Naive thymus-derived CD4-positive, alpha-beta T cell (primary cell): ENCODE measurements at regions of chr14 and their contacts with region 1.

Region 1: GRCh38 chr14:35404449-35405303 is at the start of gene NFKBIA:
- DNase-seq: peak; percentile 91 to 99 (median 93)
- ATAC-seq: peak; percentile 79
- H3K4me3 ChIP-seq: peak within 1 kb of the TSS; percentile 85
- H3K4me3 Mint-ChIP-seq: peak within 1 kb of the TSS; percentile 92 to 97 (median 94)
- H3K27ac ChIP-seq: peak within 1 kb of the TSS; percentile 96
- H3K27ac Mint-ChIP-seq: peak within 1 kb of the TSS; percentile 96 to 99 (median 98)
- H3K4me1 ChIP-seq: peaks cover 42 to 43% of the 10 kb centered on the region in 2 donors
- H3K4me1 Mint-ChIP-seq: peaks cover 28 to 63% (median 53%) of the 10 kb centered on the region in 7 donors
- H3K27me3 ChIP-seq: no peaks in the 10 kb centered on the region
- H3K27me3 Mint-ChIP-seq: peaks cover 0 to 2% (median 0%) of the 10 kb centered on the region in 5 donors
- total RNA-seq, gene NFKBIA: 144 to 1,533 (median 246) TPM

Region 2: DNA sequence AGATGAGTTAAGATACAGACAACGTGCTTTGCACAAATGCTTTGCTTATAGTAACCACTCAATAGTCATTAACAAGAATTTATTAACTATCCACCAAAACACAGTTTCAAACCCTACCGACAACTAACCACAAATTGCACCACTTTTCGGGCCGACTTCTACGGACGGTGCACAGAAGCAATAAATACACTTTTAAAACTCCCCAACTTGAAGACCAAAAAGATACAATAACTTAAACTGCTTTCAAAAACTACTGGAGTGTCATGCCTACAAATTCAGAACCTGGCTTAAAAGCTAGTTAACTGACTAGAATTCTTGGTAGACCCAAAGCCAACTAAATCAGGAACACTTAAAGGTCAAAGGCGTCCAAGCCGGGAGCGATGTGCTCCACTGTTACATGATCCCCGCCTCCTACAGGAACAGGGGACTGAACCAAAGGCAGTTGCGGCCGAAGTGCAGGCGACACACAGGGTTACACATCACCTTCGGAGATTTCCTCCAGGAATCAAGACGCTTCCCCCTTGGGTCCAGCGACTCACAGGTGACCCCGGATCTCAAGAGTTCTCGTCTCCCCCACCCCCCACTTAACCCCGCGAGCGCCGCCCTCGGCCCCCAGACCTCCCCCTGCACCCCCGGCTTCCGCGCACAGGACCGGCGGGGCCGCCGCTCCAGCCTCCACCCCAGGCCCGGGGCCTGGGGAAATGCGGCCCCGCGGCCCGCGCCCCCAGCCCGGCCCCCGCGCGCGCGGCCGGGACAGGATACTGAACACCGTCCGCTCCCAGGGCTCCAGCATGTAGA is 943.1 kb before region 1 on chr14:
- CTCF ChIA-PET with region 1: no interaction called
- POLR2A ChIA-PET with region 1: no interaction called
- intact Hi-C with region 1: loop called in 1 of 2 experiments (anchors 5 kb)
- DNase-seq: peak in 7 of 9 donors; percentile 2 to 22 (median 16)
- ATAC-seq: peak; percentile 4
- H3K4me3 ChIP-seq: peak overlapping the region; percentile 70
- H3K4me3 Mint-ChIP-seq: peak overlapping the region; percentile 83 to 97 (median 89)
- H3K27ac ChIP-seq: peak overlapping the region; percentile 78
- H3K27ac Mint-ChIP-seq: peak overlapping the region; percentile 60 to 94 (median 86)
- H3K4me1 ChIP-seq: peaks cover 0 to 6% of the 10 kb centered on the region in 2 donors
- H3K4me1 Mint-ChIP-seq: peaks cover 11 to 25% (median 15%) of the 10 kb centered on the region in 7 donors
- H3K27me3 ChIP-seq: no peaks in the 10 kb centered on the region
- H3K27me3 Mint-ChIP-seq: no peaks in the 10 kb centered on the region

Region 3: GRCh38 chr14:34875031-34875922 is 529.4 kb before region 1 on chr14 and contains the start of gene BAZ1A:
- CTCF ChIA-PET with region 1: no interaction called
- POLR2A ChIA-PET with region 1: interaction called, 9 read pairs
- intact Hi-C with region 1: loop called (anchors 1 kb)
- DNase-seq: peak; percentile 26 to 61 (median 55)
- ATAC-seq: peak; percentile 14
- H3K4me3 ChIP-seq: peak within 1 kb of the TSS; percentile 85
- H3K4me3 Mint-ChIP-seq: peak within 1 kb of the TSS; percentile 91 to 100 (median 99)
- H3K27ac ChIP-seq: peak within 1 kb of the TSS; percentile 96
- H3K27ac Mint-ChIP-seq: peak within 1 kb of the TSS; percentile 94 to 100 (median 99)
- H3K4me1 ChIP-seq: peaks cover 10 to 19% of the 10 kb centered on the region in 2 donors
- H3K4me1 Mint-ChIP-seq: peaks cover 18 to 40% (median 34%) of the 10 kb centered on the region in 7 donors
- H3K27me3 ChIP-seq: no peaks in the 10 kb centered on the region
- H3K27me3 Mint-ChIP-seq: no peaks in the 10 kb centered on the region
- total RNA-seq, gene BAZ1A: 47.4 to 62.5 (median 53.3) TPM

Region 4: DNA sequence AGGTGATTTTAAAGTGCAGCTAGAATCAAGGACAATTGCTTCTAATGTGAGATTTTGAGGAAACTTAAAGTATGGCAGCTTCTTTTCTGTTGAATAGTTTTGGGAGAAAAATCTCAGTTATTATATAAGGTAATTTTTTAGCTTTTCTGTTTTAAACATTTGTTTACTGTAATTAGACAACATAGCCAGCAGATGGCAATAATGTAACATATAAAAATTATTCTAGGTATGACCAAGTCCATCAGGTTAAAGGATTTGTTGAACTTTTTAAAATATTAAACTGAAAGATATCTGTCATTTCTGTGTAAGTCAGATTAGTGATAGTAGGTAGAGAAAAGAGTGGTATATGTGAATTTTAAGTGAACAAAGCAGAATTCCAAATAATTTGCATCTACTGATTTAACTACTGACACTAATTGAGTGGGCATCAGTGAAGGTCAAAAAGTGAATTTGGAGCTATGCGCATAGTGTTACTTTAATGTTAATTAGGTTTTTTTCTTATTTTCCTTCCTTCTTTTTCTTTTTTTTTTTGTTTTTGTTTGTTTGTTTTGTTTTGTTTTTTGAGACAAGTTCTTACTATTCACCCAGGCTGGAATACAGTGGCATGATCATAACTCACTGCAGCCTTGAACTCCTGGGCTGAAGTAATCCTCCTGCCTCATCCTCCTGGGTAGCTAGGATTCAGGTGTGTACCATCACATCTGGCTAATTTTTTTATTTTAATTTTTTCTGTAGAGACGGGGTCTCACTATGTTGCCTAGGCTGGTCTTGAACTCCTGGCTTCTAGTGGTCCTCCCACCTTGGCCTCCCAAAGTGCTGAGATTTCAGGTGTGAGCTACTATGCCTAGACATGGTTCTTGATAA is 263.7 kb before region 1 on chr14:
- CTCF ChIA-PET with region 1: interaction called, 9 read pairs
- POLR2A ChIA-PET with region 1: interaction called, 4 read pairs
- intact Hi-C with region 1: loop called (anchors 1 kb)
- DNase-seq: peak in 4 of 9 donors; percentile 24 to 57 (median 40)
- ATAC-seq: peak; percentile 69
- H3K4me3 ChIP-seq: no peak overlapping the region
- H3K4me3 Mint-ChIP-seq: no peak overlapping the region
- H3K27ac ChIP-seq: peak overlapping the region; percentile 40
- H3K27ac Mint-ChIP-seq: peak overlapping the region in 6 of 9 donors; percentile 65 to 91 (median 75)
- H3K4me1 ChIP-seq: no peaks in the 10 kb centered on the region
- H3K4me1 Mint-ChIP-seq: peaks cover 2 to 26% (median 17%) of the 10 kb centered on the region in 7 donors
- H3K27me3 ChIP-seq: no peaks in the 10 kb centered on the region
- H3K27me3 Mint-ChIP-seq: no peaks in the 10 kb centered on the region

Region 5: DNA sequence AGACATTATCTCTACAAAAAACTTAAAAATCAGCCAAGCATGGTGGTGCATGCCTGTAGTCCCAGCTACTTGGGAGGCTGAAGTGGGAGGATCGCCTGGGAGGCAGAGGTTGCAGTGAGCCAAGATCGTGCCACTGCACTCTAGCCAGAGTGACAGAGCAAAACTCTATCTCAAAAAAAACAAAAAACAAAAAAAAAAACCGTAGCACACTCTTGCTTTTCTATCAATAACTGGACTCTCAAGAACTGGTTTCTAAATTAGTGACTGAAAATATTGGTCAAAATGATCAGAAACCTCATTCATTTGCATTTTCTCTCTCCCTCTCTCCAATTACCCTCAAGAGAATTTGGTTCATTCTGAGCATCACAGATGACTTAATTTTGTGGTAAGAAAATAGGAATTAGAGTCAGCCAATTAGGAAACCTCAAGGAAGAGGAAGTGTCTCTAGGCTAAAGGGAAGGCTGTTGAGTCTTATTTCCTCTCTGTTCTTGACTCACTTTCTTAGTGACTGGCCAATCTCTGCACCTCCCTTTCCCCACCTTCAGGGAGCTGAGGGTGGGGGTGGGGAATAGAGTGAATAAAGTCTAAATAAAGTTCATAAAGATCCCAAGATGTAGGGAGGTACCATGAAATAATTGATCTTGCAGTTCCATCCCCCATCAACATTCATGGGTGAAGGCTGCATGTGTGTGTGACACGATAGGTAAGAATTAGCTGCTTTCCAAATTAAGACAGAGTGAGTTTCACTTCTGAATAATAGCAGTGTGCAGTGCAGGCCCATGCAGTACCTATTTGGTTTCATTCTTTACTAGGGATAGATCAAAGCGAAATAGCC is 119.3 kb before region 1 on chr14:
- CTCF ChIA-PET with region 1: interaction called, 6 read pairs
- POLR2A ChIA-PET with region 1: interaction called, 110 read pairs
- intact Hi-C with region 1: no loop called
- DNase-seq: no peak
- ATAC-seq: peak; percentile 83
- H3K4me3 ChIP-seq: peak overlapping the region; percentile 10
- H3K4me3 Mint-ChIP-seq: peak overlapping the region in 8 of 10 donors; percentile 5 to 76 (median 36)
- H3K27ac ChIP-seq: no peak overlapping the region
- H3K27ac Mint-ChIP-seq: peak overlapping the region; percentile 33 to 93 (median 75)
- H3K4me1 ChIP-seq: peaks cover 17 to 29% of the 10 kb centered on the region in 2 donors
- H3K4me1 Mint-ChIP-seq: peaks cover 19 to 56% (median 35%) of the 10 kb centered on the region in 7 donors
- H3K27me3 ChIP-seq: no peaks in the 10 kb centered on the region
- H3K27me3 Mint-ChIP-seq: no peaks in the 10 kb centered on the region

Region 6: DNA sequence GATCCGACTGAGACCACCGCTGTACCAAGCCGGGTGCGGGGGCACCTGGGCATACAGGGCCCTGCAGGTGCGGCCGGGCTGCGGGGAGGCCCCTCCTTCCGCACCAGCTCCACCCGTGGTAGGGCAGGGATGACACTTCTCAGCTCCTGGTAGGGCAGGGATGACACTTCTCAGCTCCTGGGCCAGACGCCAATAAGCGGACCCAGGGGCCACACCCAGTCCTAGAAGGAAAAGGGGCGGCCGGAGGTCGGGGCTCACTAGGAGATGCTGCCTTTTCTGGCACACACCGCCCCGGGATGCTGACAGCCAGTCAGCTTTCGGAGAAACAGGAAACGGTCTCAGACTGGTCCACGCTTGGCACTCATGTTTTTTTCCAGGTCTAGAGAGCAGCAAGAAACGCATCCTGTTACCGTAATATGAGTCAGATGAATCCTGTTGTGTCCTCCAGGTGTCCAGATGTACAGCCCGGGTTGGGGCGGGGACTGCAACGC is 34.9 kb before region 1 on chr14:
- CTCF ChIA-PET with region 1: interaction called, 5 read pairs
- POLR2A ChIA-PET with region 1: interaction called, 58 read pairs
- intact Hi-C with region 1: loop called (anchors 2 kb)
- DNase-seq: peak in 2 of 9 donors; percentile 12
- ATAC-seq: no peak
- H3K4me3 ChIP-seq: no peak overlapping the region
- H3K4me3 Mint-ChIP-seq: peak overlapping the region in 1 of 10 donors; percentile 7
- H3K27ac ChIP-seq: no peak overlapping the region
- H3K27ac Mint-ChIP-seq: no peak overlapping the region
- H3K4me1 ChIP-seq: peaks cover 12 to 20% of the 10 kb centered on the region in 2 donors
- H3K4me1 Mint-ChIP-seq: peaks cover 8 to 37% (median 26%) of the 10 kb centered on the region in 7 donors
- H3K27me3 ChIP-seq: no peaks in the 10 kb centered on the region
- H3K27me3 Mint-ChIP-seq: no peaks in the 10 kb centered on the region

Region 7: GRCh38 chr14:35438910-35439713 is 34.4 kb after region 1 on chr14:
- CTCF ChIA-PET with region 1: no interaction called
- POLR2A ChIA-PET with region 1: no interaction called
- intact Hi-C with region 1: no loop called
- DNase-seq: no peak
- ATAC-seq: no peak
- H3K4me3 ChIP-seq: no peak overlapping the region
- H3K4me3 Mint-ChIP-seq: no peak overlapping the region
- H3K27ac ChIP-seq: no peak overlapping the region
- H3K27ac Mint-ChIP-seq: no peak overlapping the region
- H3K4me1 ChIP-seq: no peaks in the 10 kb centered on the region
- H3K4me1 Mint-ChIP-seq: peaks cover 0 to 4% (median 0%) of the 10 kb centered on the region in 7 donors
- H3K27me3 ChIP-seq: no peaks in the 10 kb centered on the region
- H3K27me3 Mint-ChIP-seq: peaks cover 0 to 3% (median 0%) of the 10 kb centered on the region in 5 donors

Region 8: GRCh38 chr14:35826218-35826951 is 421.7 kb after region 1 on chr14 and contains the start of gene BRMS1L:
- CTCF ChIA-PET with region 1: no interaction called
- POLR2A ChIA-PET with region 1: no interaction called
- intact Hi-C with region 1: loop called in 1 of 2 experiments (anchors 5 kb)
- DNase-seq: peak; percentile 88 to 97 (median 96)
- ATAC-seq: peak; percentile 99
- H3K4me3 ChIP-seq: peak within 1 kb of the TSS; percentile 95
- H3K4me3 Mint-ChIP-seq: peak within 1 kb of the TSS; percentile 84 to 96 (median 90)
- H3K27ac ChIP-seq: peak within 1 kb of the TSS; percentile 87
- H3K27ac Mint-ChIP-seq: peak within 1 kb of the TSS; percentile 53 to 94 (median 88)
- H3K4me1 ChIP-seq: peaks cover 6 to 8% of the 10 kb centered on the region in 2 donors
- H3K4me1 Mint-ChIP-seq: peaks cover 11 to 31% (median 25%) of the 10 kb centered on the region in 7 donors
- H3K27me3 ChIP-seq: no peaks in the 10 kb centered on the region
- H3K27me3 Mint-ChIP-seq: no peaks in the 10 kb centered on the region
- total RNA-seq, gene BRMS1L: 4.2 to 8.6 (median 5.8) TPM

Region 9: GRCh38 chr14:36478782-36479181 is 1074.1 kb after region 1 on chr14:
- CTCF ChIA-PET with region 1: no interaction called
- POLR2A ChIA-PET with region 1: no interaction called
- intact Hi-C with region 1: no loop called
- DNase-seq: no peak
- ATAC-seq: no peak
- H3K4me3 ChIP-seq: no peak overlapping the region
- H3K4me3 Mint-ChIP-seq: no peak overlapping the region
- H3K27ac ChIP-seq: no peak overlapping the region
- H3K27ac Mint-ChIP-seq: no peak overlapping the region
- H3K4me1 ChIP-seq: no peaks in the 10 kb centered on the region
- H3K4me1 Mint-ChIP-seq: no peaks in the 10 kb centered on the region
- H3K27me3 ChIP-seq: no peaks in the 10 kb centered on the region
- H3K27me3 Mint-ChIP-seq: peaks cover 0 to 61% (median 32%) of the 10 kb centered on the region in 5 donors